ENCODE measurements at regions of chr9 and their contacts with region 1.

Region 1: DNA sequence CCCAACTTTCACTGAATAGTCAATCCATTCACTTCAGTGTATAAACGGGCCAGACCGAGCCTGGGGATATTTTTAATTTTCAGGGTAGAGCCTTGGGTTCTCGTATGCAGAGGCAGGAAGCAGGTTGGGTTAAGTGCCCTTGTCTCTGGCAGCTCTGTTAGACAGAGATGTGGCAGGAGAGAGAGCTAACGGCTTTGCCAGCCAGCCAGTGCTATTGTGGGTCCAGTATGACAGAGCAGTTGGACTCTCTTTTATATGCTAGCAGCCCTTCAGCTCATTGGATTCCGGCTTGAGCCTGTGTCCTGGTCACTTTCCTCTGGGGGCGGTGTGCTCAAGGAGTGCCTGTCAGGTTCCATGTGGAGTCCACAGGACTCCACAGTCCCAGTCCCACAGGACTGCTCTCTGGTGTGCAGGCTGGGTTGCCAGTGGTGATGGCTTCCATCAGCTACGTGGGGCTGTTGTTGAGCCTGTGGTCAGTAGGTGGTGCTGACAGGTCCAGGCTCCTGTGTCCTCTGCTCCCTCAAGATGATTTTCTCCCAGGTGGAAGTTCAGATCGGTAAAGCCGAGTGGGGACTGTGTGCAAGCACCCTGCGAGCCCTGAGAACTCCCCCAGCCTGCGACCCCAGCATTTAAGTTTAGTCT is 14.3 kb downstream of the CLTA start:
- DNase-seq: no peak
- H3K4me3 ChIP-seq: no peak overlapping the region
- H3K27ac ChIP-seq: no peak overlapping the region
- H3K4me1 ChIP-seq: no peaks in the 10 kb centered on the region
- H3K27me3 ChIP-seq: no peaks in the 10 kb centered on the region
- CTCF ChIP-seq: no peak
- POLR2A ChIP-seq: no peak

Region 2: GRCh38 chr9:36222449-36222848 is 17.4 kb after region 1 on chr9:
- intact Hi-C with region 1: loop called (anchors 1 kb)
- DNase-seq: no peak
- H3K4me3 ChIP-seq: no peak overlapping the region
- H3K27ac ChIP-seq: no peak overlapping the region
- H3K4me1 ChIP-seq: no peaks in the 10 kb centered on the region
- H3K27me3 ChIP-seq: no peaks in the 10 kb centered on the region
- CTCF ChIP-seq: no peak
- POLR2A ChIP-seq: no peak